ENCODE measurements at regions of chr2 and their contacts with region 1.

Region 1: GRCh38 chr2:26018176-26018716 is 15.6 kb upstream of the RAB10 start:
- DNase-seq: peak; percentile 95
- H3K4me3 ChIP-seq: no peak overlapping the region
- H3K27ac ChIP-seq: peak overlapping the region; percentile 81
- H3K4me1 ChIP-seq: peaks cover 17% of the 10 kb centered on the region
- H3K27me3 ChIP-seq: no peaks in the 10 kb centered on the region
- CTCF ChIP-seq: no peak

Region 2: DNA sequence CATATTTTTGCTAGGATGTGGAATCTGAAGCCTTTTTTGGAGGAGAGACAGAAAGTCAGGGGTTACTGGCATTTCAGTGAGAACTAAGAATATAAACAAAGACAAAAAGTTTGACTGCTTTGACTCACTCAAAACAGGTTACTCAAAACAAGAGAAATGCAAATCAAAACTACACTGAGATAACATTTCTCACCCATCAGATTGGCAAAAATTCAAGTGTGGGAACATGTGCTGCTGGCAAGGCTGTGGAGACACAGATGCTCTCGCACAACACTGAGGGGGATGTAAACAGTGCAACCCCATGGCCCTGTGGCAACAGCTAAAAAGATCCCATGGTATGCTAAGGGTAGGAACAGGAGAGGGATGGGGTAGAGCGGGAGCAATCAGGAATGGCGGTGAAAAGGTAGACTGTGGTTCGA is 431.5 kb before region 1 on chr2:
- CTCF ChIA-PET with region 1: no interaction called
- dilution Hi-C with region 1: no loop called
- in situ Hi-C with region 1: no loop called
- intact Hi-C with region 1: no loop called
- DNase-seq: no peak
- H3K4me3 ChIP-seq: no peak overlapping the region
- H3K27ac ChIP-seq: no peak overlapping the region
- H3K4me1 ChIP-seq: no peaks in the 10 kb centered on the region
- H3K27me3 ChIP-seq: no peaks in the 10 kb centered on the region
- CTCF ChIP-seq: no peak

Region 3: DNA sequence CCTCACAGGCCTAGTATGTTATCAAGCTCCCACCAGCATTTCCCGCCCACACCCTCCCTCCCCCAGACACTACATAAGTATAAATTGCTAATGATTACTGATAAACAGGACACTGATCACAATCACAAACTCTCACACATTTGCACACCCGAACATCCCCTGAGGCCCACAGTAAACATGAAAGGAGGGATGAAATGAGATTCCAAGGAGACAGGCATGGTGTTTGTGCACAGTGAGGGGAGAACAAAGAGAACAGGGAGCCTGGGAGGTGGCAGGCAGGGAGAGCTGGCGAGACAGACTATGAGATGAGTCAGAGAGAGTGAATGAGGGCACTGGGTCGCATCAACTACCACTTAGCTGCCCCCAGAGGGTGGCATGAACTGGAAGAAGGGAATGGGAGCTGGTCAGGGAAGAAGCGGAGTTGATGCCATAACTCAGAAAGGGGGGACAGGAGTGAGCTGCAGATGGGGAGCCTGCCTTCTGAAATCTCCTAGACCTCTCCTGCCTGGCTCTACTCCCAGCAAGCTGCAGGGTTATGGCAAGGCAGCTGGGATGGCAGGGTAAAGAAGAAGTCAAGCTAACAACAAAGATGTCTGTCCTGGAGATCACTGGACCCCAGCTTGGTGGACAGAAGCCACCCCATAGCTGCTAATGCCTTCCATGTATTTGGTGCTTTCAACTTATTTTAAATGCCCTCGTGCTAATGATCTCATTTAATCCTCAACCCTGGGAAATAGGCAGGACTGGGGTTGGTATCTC is 41.1 kb before region 1 on chr2:
- CTCF ChIA-PET with region 1: no interaction called
- dilution Hi-C with region 1: loop called (anchors 5 kb)
- in situ Hi-C with region 1: no loop called
- intact Hi-C with region 1: no loop called
- DNase-seq: peak; percentile 72
- H3K4me3 ChIP-seq: no peak overlapping the region
- H3K27ac ChIP-seq: peak overlapping the region; percentile 92
- H3K4me1 ChIP-seq: peaks cover 42% of the 10 kb centered on the region
- H3K27me3 ChIP-seq: no peaks in the 10 kb centered on the region
- CTCF ChIP-seq: no peak

Region 4: GRCh38 chr2:26001743-26002351 is 16.4 kb before region 1 on chr2:
- CTCF ChIA-PET with region 1: no interaction called
- dilution Hi-C with region 1: no loop called
- in situ Hi-C with region 1: no loop called
- intact Hi-C with region 1: loop called (anchors 2 kb)
- DNase-seq: no peak
- H3K4me3 ChIP-seq: no peak overlapping the region
- H3K27ac ChIP-seq: peak overlapping the region; percentile 37
- H3K4me1 ChIP-seq: peaks cover 23% of the 10 kb centered on the region
- H3K27me3 ChIP-seq: no peaks in the 10 kb centered on the region
- CTCF ChIP-seq: no peak

Measured in mammary epithelial cell (primary cell).